Naive thymus-derived CD4-positive, alpha-beta T cell (primary cell): ENCODE measurements at regions of chr11 and their contacts with region 1.

Region 1: DNA sequence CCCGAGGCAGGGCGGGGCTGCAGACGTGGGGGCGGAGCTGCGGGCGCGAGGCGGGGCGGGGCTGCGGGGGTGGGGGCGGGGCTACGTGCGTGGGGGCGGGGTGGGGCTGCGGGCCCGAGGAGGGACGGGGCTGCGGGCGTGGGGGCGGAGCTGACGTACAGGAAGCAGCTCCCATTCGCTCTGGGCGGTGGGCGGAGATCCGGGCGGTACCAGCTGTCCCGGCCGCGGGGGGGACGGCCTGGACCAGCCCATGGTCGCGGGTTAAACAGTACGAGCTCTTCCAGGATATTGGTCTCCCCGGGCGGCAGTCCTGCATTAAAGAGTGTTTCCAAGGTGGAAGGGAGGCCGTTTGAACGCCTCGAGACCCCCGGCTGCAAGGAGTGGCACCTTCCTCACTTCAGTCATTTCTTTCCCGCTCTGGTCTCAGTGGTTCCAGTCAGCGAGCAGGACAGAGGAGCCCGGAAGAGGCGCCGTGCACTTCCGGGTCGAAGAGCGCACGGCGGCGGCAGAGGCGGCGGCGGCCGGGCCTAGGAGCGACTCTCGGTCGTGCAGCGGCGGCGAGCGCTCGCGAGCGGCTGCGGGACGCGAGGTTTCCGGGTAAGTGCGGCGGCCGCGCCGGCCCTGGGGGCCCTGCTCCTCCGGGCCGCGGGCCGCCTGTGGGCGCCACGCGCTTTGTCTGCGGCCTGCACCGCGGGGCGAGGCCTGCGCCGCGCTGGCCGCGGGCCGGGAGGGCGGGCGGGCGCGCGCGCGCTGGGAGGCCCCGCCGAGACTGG is at the start of gene PHRF1:
- DNase-seq: peak; percentile 93 to 99 (median 97)
- ATAC-seq: peak; percentile 93
- H3K4me3 ChIP-seq: peak within 1 kb of the TSS; percentile 98
- H3K4me3 Mint-ChIP-seq: peak within 1 kb of the TSS; percentile 93 to 99 (median 98)
- H3K27ac ChIP-seq: peak within 1 kb of the TSS; percentile 98
- H3K27ac Mint-ChIP-seq: peak within 1 kb of the TSS; percentile 96 to 100 (median 99)
- H3K4me1 ChIP-seq: peaks cover 26 to 44% of the 10 kb centered on the region in 2 donors
- H3K4me1 Mint-ChIP-seq: peaks cover 42 to 60% (median 46%) of the 10 kb centered on the region in 7 donors
- H3K27me3 ChIP-seq: no peaks in the 10 kb centered on the region
- H3K27me3 Mint-ChIP-seq: peaks cover 0 to 9% (median 0%) of the 10 kb centered on the region in 5 donors
- total RNA-seq, gene PHRF1: 47.3 to 55.2 (median 49.4) TPM

Region 2: DNA sequence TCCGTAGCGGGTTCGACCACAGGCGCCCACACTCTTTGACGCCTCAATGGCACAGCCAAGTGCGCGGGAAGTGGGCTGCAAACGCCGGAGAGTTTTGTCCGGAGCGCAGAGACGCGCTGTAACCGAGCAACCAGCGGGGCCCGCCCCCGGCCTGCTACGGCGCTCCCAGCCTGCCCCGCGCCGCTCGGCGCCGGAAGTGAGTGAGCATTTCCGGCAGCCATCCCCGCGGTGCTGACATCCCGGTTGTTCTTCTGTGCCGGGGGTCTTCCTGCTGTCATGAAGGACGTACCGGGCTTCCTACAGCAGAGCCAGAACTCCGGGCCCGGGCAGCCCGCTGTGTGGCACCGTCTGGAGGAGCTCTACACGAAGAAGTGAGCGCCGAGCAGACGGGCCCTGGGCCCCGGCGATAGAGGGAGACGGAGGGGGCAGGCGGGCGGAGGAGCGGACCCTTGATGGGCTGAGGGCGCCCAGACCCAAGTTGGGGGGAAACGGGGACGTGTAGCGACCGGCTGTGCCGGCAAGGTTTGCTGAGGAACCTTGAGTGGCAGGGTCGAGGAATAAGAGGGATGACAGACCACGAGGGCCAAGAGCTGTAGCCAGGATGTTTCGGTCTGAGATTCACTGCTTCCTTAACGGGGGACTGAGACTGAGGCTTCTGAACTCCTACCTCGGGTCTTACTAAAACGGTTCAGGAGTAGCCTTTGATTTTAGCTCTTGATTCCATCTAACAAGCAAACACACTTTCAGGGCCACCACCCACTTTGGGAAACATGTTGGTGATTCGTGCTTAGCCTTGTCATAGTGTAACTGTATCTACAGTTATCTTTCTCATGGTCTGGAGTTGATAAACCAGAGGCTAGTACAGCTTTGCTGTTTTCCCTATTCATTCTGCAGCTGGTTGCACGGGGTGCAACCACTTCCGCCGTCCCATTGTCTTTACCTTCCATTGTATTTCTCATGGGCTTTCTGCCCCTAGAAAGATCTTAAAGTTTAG is 339.1 kb before region 1 on chr11 and contains the start of gene PSMD13:
- CTCF ChIA-PET with region 1: interaction called, 3 read pairs
- POLR2A ChIA-PET with region 1: no interaction called
- intact Hi-C with region 1: loop called in 1 of 2 experiments (anchors 5 kb)
- DNase-seq: peak; percentile 82 to 92 (median 88)
- ATAC-seq: peak; percentile 88
- H3K4me3 ChIP-seq: peak within 1 kb of the TSS; percentile 100
- H3K4me3 Mint-ChIP-seq: peak within 1 kb of the TSS; percentile 84 to 99 (median 96)
- H3K27ac ChIP-seq: peak within 1 kb of the TSS; percentile 97
- H3K27ac Mint-ChIP-seq: peak within 1 kb of the TSS; percentile 84 to 100 (median 100)
- H3K4me1 ChIP-seq: peaks cover 17 to 23% of the 10 kb centered on the region in 2 donors
- H3K4me1 Mint-ChIP-seq: peaks cover 26 to 66% (median 53%) of the 10 kb centered on the region in 7 donors
- H3K27me3 ChIP-seq: no peaks in the 10 kb centered on the region
- H3K27me3 Mint-ChIP-seq: no peaks in the 10 kb centered on the region
- total RNA-seq, gene PSMD13: 64.3 to 172 (median 86.9) TPM

Region 3: GRCh38 chr11:535519-536454 is 40.4 kb before region 1 on chr11 and contains the start of gene HRAS:
- CTCF ChIA-PET with region 1: no interaction called
- POLR2A ChIA-PET with region 1: interaction called, 5 read pairs
- intact Hi-C with region 1: loop called in 1 of 2 experiments (anchors 1 kb)
- DNase-seq: peak; percentile 92 to 99 (median 96)
- ATAC-seq: peak; percentile 93
- H3K4me3 ChIP-seq: peak within 1 kb of the TSS; percentile 66
- H3K4me3 Mint-ChIP-seq: peak within 1 kb of the TSS; percentile 87 to 97 (median 91)
- H3K27ac ChIP-seq: peak within 1 kb of the TSS; percentile 75
- H3K27ac Mint-ChIP-seq: peak within 1 kb of the TSS; percentile 84 to 96 (median 91)
- H3K4me1 ChIP-seq: peaks cover 20 to 21% of the 10 kb centered on the region in 2 donors
- H3K4me1 Mint-ChIP-seq: peaks cover 5 to 16% (median 11%) of the 10 kb centered on the region in 7 donors
- H3K27me3 ChIP-seq: no peaks in the 10 kb centered on the region
- H3K27me3 Mint-ChIP-seq: no peaks in the 10 kb centered on the region
- total RNA-seq, gene HRAS: 22.3 to 52.0 (median 31.9) TPM

Region 4: DNA sequence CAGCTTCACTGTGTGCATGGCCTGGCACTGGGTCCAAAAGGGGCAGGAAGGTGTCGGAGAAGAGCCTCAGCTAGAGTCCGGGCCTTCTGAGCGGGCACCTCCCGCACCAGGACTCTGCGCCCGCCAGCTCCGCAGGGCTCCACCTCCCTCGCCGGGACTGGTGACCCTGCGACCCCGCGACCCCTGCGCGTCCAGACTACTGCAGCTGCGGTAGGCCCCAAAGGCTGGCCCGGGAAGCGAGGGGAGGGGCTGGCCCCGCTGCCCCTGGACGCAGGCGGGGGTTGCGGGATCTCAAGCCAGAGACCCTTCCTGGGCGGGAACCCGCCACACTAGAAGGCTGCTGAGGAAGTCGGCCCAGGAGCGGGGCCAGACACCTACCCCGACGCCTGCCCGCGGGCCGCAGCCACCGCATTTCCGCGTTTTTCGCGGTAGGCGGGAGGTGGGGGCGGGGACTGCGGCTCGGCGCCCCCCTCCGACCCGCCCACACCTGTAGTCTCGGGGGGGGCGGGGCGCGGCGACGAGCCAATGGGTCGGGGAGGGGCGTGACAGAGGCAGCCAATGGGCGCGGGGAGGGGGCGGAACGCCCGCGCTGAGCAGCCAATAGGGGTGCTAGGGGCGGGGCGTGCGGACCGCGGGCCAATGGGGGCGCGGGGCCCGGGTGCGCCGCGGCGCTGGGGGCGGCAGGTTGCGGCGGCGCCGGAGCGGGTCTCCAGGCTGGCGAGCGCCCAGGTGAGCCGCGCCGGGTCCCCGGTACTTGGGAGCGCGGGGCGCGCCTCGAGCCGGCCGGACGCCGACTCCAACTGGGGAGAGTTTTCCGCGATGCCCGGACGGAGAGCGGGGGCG is 15.7 kb before region 1 on chr11 and contains the starts of genes LMNTD2 and RASSF7:
- CTCF ChIA-PET with region 1: interaction called, 5 read pairs
- POLR2A ChIA-PET with region 1: interaction called, 21 read pairs
- intact Hi-C with region 1: loop called (anchors 1 kb)
- DNase-seq: peak; percentile 89 to 98 (median 94)
- ATAC-seq: peak; percentile 98
- H3K4me3 ChIP-seq: peak within 1 kb of the TSS; percentile 68
- H3K4me3 Mint-ChIP-seq: peak within 1 kb of the TSS; percentile 78 to 94 (median 89)
- H3K27ac ChIP-seq: peak within 1 kb of the TSS; percentile 82
- H3K27ac Mint-ChIP-seq: peak within 1 kb of the TSS; percentile 35 to 93 (median 84)
- H3K4me1 ChIP-seq: peaks cover 14 to 17% of the 10 kb centered on the region in 2 donors
- H3K4me1 Mint-ChIP-seq: peaks cover 4 to 17% (median 9%) of the 10 kb centered on the region in 7 donors
- H3K27me3 ChIP-seq: no peaks in the 10 kb centered on the region
- H3K27me3 Mint-ChIP-seq: peaks cover 0 to 18% (median 0%) of the 10 kb centered on the region in 5 donors
- total RNA-seq, gene LMNTD2: 2.8 to 14.7 (median 9.6) TPM
- total RNA-seq, gene RASSF7: 20.0 to 45.4 (median 35.5) TPM

Region 5: GRCh38 chr11:615504-616319 is 39.5 kb after region 1 on chr11 and contains the start of gene IRF7:
- CTCF ChIA-PET with region 1: no interaction called
- POLR2A ChIA-PET with region 1: interaction called, 14 read pairs
- intact Hi-C with region 1: loop called (anchors 1 kb)
- DNase-seq: peak; percentile 70 to 91 (median 76)
- ATAC-seq: peak; percentile 91
- H3K4me3 ChIP-seq: peak within 1 kb of the TSS; percentile 97
- H3K4me3 Mint-ChIP-seq: peak within 1 kb of the TSS; percentile 80 to 94 (median 92)
- H3K27ac ChIP-seq: peak within 1 kb of the TSS; percentile 95
- H3K27ac Mint-ChIP-seq: peak within 1 kb of the TSS; percentile 83 to 97 (median 93)
- H3K4me1 ChIP-seq: peaks cover 8 to 22% of the 10 kb centered on the region in 2 donors
- H3K4me1 Mint-ChIP-seq: peaks cover 0 to 22% (median 15%) of the 10 kb centered on the region in 7 donors
- H3K27me3 ChIP-seq: no peaks in the 10 kb centered on the region
- H3K27me3 Mint-ChIP-seq: no peaks in the 10 kb centered on the region
- total RNA-seq, gene IRF7: 57.0 to 134 (median 64.6) TPM

Region 6: DNA sequence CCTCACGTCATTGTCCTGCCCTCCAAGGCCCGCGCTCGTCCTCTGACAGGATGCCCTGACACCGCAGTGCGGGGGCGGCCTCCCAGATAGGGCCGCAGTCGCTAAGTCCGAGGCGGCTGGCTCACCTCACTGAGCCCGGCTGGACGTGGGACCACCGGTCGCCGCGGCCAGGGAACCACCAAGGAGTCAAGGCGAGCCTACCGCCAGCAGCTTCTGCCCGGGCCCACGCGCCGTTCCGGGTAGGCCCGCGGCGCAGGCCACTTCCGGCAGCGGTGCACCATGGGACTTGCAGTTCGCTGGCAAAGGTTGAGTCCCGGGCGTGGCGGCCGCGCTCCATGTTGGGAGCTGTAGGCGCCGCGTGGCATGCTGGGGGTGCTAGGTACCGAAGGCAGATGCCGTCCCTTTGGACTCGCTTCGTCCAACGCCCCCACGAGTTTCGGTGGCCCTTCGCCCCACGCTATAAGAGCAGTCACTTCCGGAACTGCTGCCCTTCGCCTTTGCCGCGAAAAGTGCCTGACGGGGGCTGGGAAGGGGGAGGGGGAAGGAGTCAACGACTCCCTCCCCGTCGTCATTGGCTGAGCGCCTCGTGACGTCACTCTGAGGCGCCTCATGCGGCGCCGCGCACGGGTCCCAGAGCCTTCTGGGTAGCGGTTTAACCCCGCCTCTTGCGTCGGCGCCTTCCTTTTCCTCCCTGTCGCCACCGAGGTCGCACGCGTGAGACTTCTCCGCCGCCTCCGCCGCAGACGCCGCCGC is 233.3 kb after region 1 on chr11 and contains the start of gene RPLP2:
- CTCF ChIA-PET with region 1: no interaction called
- POLR2A ChIA-PET with region 1: no interaction called
- intact Hi-C with region 1: loop called (anchors 1 to 2 kb)
- DNase-seq: peak; percentile 95 to 99 (median 98)
- ATAC-seq: peak; percentile 90
- H3K4me3 ChIP-seq: peak within 1 kb of the TSS; percentile 96
- H3K4me3 Mint-ChIP-seq: peak within 1 kb of the TSS; percentile 88 to 96 (median 95)
- H3K27ac ChIP-seq: peak within 1 kb of the TSS; percentile 96
- H3K27ac Mint-ChIP-seq: peak within 1 kb of the TSS; percentile 91 to 99 (median 97)
- H3K4me1 ChIP-seq: peaks cover 24 to 26% of the 10 kb centered on the region in 2 donors
- H3K4me1 Mint-ChIP-seq: peaks cover 8 to 51% (median 32%) of the 10 kb centered on the region in 7 donors
- H3K27me3 ChIP-seq: no peaks in the 10 kb centered on the region
- H3K27me3 Mint-ChIP-seq: no peaks in the 10 kb centered on the region
- total RNA-seq, gene RPLP2: 2,266 to 5,944 (median 5,497) TPM